ENCODE measurements at regions of chr3 and their contacts with region 1.

Region 1: DNA sequence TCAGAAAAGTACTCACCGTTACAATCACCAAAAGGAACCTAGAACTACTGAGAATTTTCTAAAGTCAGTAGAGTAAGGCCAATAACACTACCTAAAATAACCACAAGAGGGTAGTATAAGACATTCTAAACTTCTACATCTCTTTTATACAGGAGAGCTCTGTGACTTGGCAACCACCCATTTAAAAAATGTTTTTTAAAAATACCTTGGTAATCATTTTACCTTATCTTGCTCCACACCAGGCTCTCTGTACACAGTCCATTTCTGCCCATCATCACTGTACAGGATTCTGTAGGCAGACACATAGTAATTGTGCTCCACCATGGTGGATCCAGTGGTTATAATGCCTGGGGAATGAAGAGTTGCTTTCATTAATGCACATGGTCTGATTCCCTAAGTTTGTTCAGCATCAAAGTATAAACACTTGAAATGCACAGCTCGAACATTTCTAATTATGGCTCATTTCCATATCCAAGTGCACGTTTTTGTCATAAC is 54.5 kb downstream of the ST3GAL6 start:
- DNase-seq: no peak
- H3K4me3 Mint-ChIP-seq: no peak overlapping the region
- H3K27ac Mint-ChIP-seq: no peak overlapping the region
- H3K4me1 Mint-ChIP-seq: no peaks in the 10 kb centered on the region
- H3K27me3 Mint-ChIP-seq: no peaks in the 10 kb centered on the region

Region 2: DNA sequence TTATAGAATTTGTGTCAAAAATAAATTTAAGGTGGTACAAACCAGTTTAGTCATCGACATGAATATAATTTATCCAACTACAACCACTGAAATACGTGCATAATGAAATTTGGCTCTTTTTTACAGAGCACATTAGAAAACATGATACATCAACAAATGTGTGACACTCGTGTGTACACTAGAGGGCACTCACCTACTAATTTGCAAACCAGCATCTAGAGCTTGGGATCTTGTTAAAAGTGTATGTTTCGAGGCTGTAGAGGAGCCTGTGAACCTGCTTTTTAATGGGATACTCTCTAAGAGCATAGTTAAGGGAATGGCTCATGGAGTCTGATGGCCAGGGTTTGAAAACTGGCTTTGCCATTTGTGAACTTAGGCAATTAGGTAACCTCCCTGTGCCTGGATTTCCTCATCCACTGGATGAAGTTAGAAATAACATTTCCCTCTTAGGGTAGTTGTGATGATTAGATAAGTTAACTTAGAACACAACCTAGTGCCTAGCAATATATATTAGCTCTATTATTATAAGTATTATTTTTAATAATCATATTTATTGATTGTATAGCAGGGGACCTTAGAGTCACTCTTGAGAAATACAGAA is 215.4 kb before region 1 on chr3:
- intact Hi-C with region 1: loop called (anchors 2 kb)
- DNase-seq: no peak
- H3K4me3 Mint-ChIP-seq: no peak overlapping the region
- H3K27ac Mint-ChIP-seq: no peak overlapping the region
- H3K4me1 Mint-ChIP-seq: peaks cover 8% of the 10 kb centered on the region
- H3K27me3 Mint-ChIP-seq: peaks cover 12% of the 10 kb centered on the region

Region 3: DNA sequence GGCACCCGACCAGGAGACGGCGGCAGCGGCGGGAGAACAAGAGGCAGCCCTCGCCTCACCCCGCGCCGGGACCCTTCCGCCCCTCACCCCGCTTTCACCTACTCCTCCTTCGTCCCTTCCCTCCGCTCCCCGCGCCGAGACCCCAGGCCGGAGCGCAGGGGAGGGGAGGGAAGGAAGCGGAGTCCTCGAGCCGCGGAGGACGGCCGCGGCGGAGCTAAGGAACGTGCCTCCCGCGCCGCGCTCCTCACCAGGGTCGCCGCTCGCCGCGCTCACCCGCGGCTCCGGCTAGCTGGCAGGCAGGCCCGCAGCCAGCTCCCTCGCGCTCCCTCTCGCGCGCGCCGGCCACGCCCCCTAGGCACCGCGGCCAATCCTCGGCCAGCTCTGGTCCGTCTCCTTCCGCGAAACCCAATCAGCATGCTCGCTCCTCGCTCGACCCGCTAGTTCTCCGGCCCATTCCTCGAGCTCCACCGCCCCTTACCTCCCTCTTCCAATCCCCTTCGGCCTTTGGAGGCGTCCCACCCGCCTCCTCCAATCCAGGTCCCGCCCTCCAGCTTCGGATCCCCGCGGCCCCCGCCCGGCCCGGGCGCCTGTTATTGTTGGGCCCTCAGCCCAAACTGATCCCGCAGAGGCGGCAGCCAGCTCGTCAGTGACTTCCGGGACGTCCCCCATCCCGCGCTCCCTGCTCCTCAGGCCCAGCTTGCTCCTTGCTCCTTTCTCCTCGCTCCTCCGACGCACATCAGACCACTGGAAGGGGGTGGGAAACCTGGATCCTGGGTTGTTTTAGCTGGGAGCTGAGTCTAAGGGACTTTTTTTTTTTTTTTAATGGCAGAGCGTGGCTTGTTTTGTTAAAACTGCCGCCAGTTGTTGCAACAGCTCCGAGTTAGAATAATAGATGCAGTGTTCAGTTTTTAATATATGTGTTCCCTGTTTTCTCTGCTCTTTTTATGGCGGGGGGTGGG is 84.1 kb after region 1 on chr3 and contains the start of gene DCBLD2:
- intact Hi-C with region 1: loop called (anchors 5 kb)
- DNase-seq: peak; percentile 95
- H3K4me3 Mint-ChIP-seq: peak within 1 kb of the TSS; percentile 83
- H3K27ac Mint-ChIP-seq: peak within 1 kb of the TSS; percentile 57
- H3K4me1 Mint-ChIP-seq: peaks cover 14% of the 10 kb centered on the region
- H3K27me3 Mint-ChIP-seq: peaks cover 20% of the 10 kb centered on the region
- total RNA-seq, gene DCBLD2: 4.2 and 5.1 TPM in 2 replicates

Region 4: DNA sequence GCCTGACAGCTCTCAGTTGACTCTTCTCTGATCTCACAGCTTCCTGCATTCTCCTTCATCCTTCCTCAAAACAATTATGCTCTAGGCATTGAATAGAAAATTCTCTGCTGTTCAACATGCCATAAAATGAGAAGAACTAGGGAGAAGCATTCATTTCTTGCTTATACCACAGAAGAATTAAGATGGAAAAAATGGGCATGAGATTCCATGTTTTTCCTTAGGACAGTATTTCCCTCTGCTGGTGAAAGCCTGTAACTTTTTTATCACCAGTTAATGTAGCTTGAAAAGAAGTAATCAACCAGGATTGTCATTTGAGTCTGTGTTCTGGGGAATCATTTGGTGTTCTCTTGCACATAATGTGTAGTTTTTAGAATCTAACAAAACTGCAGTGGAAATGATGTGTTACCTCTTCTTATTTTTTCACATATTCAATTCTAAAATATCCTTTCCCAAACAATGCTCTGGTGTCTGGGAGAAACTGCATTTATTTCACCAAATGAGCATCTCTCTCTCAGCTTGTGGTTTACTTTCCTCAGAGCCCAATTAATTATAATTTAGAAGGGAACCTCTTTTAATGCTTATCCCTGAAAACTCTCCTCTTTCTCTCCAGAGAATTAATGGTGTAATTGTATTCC is 176.7 kb after region 1 on chr3:
- intact Hi-C with region 1: loop called (anchors 1 kb)
- DNase-seq: no peak
- H3K4me3 Mint-ChIP-seq: no peak overlapping the region
- H3K27ac Mint-ChIP-seq: no peak overlapping the region
- H3K4me1 Mint-ChIP-seq: no peaks in the 10 kb centered on the region
- H3K27me3 Mint-ChIP-seq: peaks cover 13% of the 10 kb centered on the region

Region 5: DNA sequence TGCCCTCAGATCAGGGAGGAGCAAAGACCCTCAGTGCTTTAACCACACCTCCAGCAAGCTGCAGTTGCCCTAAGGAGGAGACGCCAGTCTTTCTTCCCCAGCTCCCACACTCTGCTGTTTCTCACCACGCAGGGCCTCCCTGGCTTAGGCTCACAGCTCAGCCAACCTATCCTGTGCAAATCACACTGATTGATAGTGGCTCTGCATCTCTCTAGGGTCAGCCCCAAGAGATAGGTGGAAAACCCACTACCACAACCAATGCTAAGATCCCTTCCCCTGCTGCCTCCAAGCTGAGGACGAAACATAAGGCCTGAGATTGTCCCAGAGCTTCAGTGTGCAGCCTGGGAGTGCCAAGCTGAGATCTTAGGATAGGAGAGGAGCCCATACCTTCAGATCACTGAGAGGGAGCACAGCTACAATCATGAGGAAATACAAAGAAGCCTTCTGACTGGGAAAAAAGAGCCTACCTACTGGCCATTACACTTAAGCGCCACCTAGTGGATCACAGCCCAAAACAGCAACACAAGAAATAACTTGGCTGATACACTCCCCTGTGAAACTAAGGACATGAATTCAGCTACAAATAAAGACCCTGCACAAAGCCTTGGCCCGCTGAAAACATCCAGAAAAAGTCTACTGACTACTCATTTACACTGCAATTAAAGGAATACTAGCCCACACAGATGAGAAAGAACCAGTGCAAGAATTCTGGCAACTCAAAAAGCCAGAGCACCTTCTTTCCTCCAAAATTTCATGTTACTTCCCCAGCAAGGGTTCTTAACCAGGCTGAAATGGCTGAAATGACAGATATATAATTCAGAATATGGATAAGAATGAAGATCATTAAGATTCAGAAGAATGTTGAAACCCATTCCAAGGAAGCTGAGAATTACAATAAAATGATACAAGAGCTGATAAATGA is 355.4 kb after region 1 on chr3:
- intact Hi-C with region 1: loop called (anchors 2 kb)
- DNase-seq: no peak
- H3K4me3 Mint-ChIP-seq: no peak overlapping the region
- H3K27ac Mint-ChIP-seq: no peak overlapping the region
- H3K4me1 Mint-ChIP-seq: no peaks in the 10 kb centered on the region
- H3K27me3 Mint-ChIP-seq: no peaks in the 10 kb centered on the region